ENCODE measurements at regions of chr1 and their contacts with region 1.

Region 1: DNA sequence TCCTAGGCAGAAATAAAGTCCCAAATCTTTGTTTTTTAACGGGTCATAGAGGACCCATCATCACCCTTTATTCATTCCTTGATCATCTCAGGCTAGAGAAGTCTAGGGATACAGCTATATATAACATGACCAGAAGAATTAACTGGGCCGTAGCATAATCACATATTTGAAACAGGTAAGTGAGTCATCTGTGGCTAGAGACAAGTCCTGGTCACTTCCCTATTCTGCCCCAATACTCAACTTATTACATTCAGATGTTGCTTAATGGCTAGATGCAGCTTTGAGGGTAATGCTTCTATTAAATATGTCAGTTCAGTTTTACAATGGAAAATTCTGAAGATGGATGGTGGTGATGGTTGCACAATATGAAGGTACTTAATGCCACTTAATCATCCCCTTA is 47.0 kb downstream of the EXO1 start:
- DNase-seq: no peak
- H3K4me3 ChIP-seq: no peak overlapping the region
- H3K27ac ChIP-seq: no peak overlapping the region
- H3K4me1 ChIP-seq: no peaks in the 10 kb centered on the region
- H3K27me3 ChIP-seq: no peaks in the 10 kb centered on the region
- CTCF ChIP-seq: no peak
- POLR2A ChIP-seq: no peak

Region 2: GRCh38 chr1:242017584-242018233 is 122.7 kb after region 1 on chr1:
- intact Hi-C with region 1: loop called (anchors 10 kb)
- DNase-seq: peak; percentile 38 to 44
- H3K4me3 ChIP-seq: no peak overlapping the region
- H3K27ac ChIP-seq: no peak overlapping the region
- H3K4me1 ChIP-seq: no peaks in the 10 kb centered on the region
- H3K27me3 ChIP-seq: no peaks in the 10 kb centered on the region
- CTCF ChIP-seq: peak in 5 of 6 experiments; percentile 18 to 69 (median 51)
- POLR2A ChIP-seq: no peak

Region 3: GRCh38 chr1:242120432-242120831 is 225.4 kb after region 1 on chr1:
- intact Hi-C with region 1: no loop called
- DNase-seq: no peak
- H3K4me3 ChIP-seq: no peak overlapping the region
- H3K27ac ChIP-seq: no peak overlapping the region
- H3K4me1 ChIP-seq: no peaks in the 10 kb centered on the region
- H3K27me3 ChIP-seq: no peaks in the 10 kb centered on the region
- CTCF ChIP-seq: no peak
- POLR2A ChIP-seq: no peak